ENCODE measurements at regions of chr16 and their contacts with region 1.

Region 1: DNA sequence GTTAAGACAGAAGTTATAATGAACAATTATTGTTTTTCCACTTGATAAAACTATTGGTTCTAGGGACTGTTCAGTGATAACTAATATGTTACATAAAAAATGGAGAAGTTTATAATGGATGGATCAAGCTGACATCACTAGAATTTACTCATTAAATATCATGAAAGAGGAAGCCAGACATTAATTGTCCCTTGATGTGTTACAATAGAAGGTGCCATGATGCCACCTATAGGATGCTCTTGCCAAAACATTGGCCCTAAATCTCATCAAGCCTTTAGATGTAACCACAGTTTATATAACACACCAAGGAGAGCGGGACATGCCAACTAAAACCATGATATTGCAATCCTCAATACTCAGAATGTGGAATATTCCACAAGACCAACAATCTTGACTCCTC is 147.9 kb upstream of the MON1B start:
- DNase-seq: peak; percentile 30
- H3K4me3 Mint-ChIP-seq: no peak overlapping the region
- H3K27ac Mint-ChIP-seq: no peak overlapping the region
- H3K4me1 Mint-ChIP-seq: no peaks in the 10 kb centered on the region
- H3K27me3 Mint-ChIP-seq: no peaks in the 10 kb centered on the region
- CTCF ChIP-seq: peak; percentile 12

Region 2: GRCh38 chr16:75789237-75789636 is 1253.8 kb before region 1 on chr16:
- CTCF ChIA-PET with region 1: no interaction called
- intact Hi-C with region 1: loop called (anchors 1 kb)
- DNase-seq: peak; percentile 38
- H3K4me3 Mint-ChIP-seq: no peak overlapping the region
- H3K27ac Mint-ChIP-seq: no peak overlapping the region
- H3K4me1 Mint-ChIP-seq: no peaks in the 10 kb centered on the region
- H3K27me3 Mint-ChIP-seq: peaks cover 29% of the 10 kb centered on the region
- CTCF ChIP-seq: peak; percentile 81

Region 3: GRCh38 chr16:76278980-76279379 is 764.1 kb before region 1 on chr16:
- CTCF ChIA-PET with region 1: no interaction called
- intact Hi-C with region 1: loop called (anchors 2 kb)
- DNase-seq: no peak
- H3K4me3 Mint-ChIP-seq: no peak overlapping the region
- H3K27ac Mint-ChIP-seq: no peak overlapping the region
- H3K4me1 Mint-ChIP-seq: no peaks in the 10 kb centered on the region
- H3K27me3 Mint-ChIP-seq: peaks cover 21% of the 10 kb centered on the region
- CTCF ChIP-seq: no peak

Region 4: GRCh38 chr16:76653390-76654026 is 389.6 kb before region 1 on chr16:
- CTCF ChIA-PET with region 1: no interaction called
- intact Hi-C with region 1: loop called (anchors 5 kb)
- DNase-seq: peak; percentile 44
- H3K4me3 Mint-ChIP-seq: no peak overlapping the region
- H3K27ac Mint-ChIP-seq: no peak overlapping the region
- H3K4me1 Mint-ChIP-seq: peaks cover 12% of the 10 kb centered on the region
- H3K27me3 Mint-ChIP-seq: peaks cover 13% of the 10 kb centered on the region
- CTCF ChIP-seq: peak; percentile 56

Region 5: GRCh38 chr16:76668207-76668725 is 374.8 kb before region 1 on chr16:
- CTCF ChIA-PET with region 1: no interaction called
- intact Hi-C with region 1: loop called (anchors 1 kb)
- DNase-seq: peak; percentile 53
- H3K4me3 Mint-ChIP-seq: no peak overlapping the region
- H3K27ac Mint-ChIP-seq: no peak overlapping the region
- H3K4me1 Mint-ChIP-seq: peaks cover 32% of the 10 kb centered on the region
- H3K27me3 Mint-ChIP-seq: no peaks in the 10 kb centered on the region
- CTCF ChIP-seq: no peak

Region 6: DNA sequence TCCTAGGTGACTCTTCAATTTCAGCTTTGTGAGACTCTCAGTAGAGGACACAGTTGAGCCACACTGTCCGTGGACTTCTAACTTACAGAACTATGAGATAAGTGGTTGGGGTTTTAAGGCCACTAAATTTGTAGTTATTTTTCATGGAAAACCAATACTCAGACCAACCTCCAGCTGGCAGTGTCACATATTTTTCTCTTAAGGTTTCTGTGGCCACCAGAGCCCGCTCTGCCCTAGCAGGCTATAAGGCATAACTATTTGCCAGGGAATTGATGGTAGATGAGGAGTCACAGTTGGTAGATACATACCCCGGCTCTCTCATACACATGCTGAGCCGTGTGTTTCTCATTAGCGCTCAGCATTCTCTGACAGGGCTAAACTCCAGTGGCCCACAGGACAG is 188.8 kb before region 1 on chr16:
- CTCF ChIA-PET with region 1: no interaction called
- intact Hi-C with region 1: loop called (anchors 1 kb)
- DNase-seq: peak; percentile 17
- H3K4me3 Mint-ChIP-seq: no peak overlapping the region
- H3K27ac Mint-ChIP-seq: no peak overlapping the region
- H3K4me1 Mint-ChIP-seq: no peaks in the 10 kb centered on the region
- H3K27me3 Mint-ChIP-seq: no peaks in the 10 kb centered on the region
- CTCF ChIP-seq: no peak

Region 7: GRCh38 chr16:77028655-77029054 is 14.4 kb before region 1 on chr16:
- CTCF ChIA-PET with region 1: no interaction called
- intact Hi-C with region 1: no loop called
- DNase-seq: no peak
- H3K4me3 Mint-ChIP-seq: no peak overlapping the region
- H3K27ac Mint-ChIP-seq: no peak overlapping the region
- H3K4me1 Mint-ChIP-seq: no peaks in the 10 kb centered on the region
- H3K27me3 Mint-ChIP-seq: no peaks in the 10 kb centered on the region
- CTCF ChIP-seq: no peak

Measured in Calu3 (cell line).